ENCODE measurements at regions of chr4 and their contacts with region 1.

Region 1: DNA sequence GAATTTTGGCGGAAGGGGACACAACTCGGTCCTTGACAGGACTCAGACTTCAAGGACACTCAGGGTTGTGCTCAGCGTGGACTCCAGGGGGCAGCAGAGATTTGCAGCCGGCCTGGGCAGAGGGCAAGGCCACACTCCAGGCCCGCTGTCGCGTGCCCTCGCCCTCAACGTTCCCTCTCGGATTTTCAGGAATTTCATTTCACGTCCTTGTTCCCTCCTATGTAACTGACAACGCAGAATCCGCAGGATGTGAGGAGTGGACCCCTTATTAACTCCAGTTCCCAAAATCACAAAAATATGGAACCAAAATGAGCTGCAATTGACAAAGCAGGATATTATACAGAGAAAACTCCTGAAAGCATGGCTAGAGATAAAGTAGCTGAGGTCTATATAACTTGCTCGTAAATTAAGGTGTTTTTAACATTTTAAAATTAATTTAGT is 21.0 kb upstream of the DCTD start:
- DNase-seq: no peak
- H3K4me3 ChIP-seq: no peak overlapping the region
- CTCF ChIP-seq: peak; percentile 95

Region 2: GRCh38 chr4:182917182-182918043 is 20.8 kb before region 1 on chr4 and contains the start of gene DCTD:
- CTCF ChIA-PET with region 1: interaction called, 84 read pairs
- POLR2A ChIA-PET with region 1: no interaction called
- DNase-seq: no peak
- H3K4me3 ChIP-seq: peak within 1 kb of the TSS; percentile 71
- CTCF ChIP-seq: peak; percentile 48

Region 3: DNA sequence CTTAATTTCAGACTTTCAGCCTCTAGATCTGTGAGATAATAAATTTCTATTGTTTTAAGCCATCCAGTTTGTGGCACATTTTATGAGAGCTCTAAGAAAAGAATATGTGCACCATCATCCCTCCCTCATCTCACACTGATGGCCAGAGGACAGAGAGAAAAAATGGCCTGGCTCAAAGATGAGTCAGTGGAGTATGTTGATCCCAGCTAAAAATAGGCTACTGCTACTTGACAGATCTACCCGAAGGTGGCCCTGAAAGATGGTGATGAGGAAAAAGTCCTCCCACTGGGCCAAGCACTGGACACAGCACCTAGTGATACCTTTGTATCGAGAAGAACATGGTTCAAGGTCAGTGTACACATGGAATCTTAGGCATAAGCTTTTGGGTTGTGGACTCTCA is 17.2 kb after region 1 on chr4:
- CTCF ChIA-PET with region 1: interaction called, 81 read pairs
- POLR2A ChIA-PET with region 1: no interaction called
- DNase-seq: no peak
- H3K4me3 ChIP-seq: no peak overlapping the region
- CTCF ChIP-seq: no peak

Region 4: GRCh38 chr4:183098723-183099536 is 160.7 kb after region 1 on chr4 and contains the start of gene WWC2:
- CTCF ChIA-PET with region 1: interaction called, 11 read pairs
- POLR2A ChIA-PET with region 1: no interaction called
- DNase-seq: peak; percentile 41
- H3K4me3 ChIP-seq: peak within 1 kb of the TSS; percentile 94
- CTCF ChIP-seq: peak; percentile 7

Region 5: DNA sequence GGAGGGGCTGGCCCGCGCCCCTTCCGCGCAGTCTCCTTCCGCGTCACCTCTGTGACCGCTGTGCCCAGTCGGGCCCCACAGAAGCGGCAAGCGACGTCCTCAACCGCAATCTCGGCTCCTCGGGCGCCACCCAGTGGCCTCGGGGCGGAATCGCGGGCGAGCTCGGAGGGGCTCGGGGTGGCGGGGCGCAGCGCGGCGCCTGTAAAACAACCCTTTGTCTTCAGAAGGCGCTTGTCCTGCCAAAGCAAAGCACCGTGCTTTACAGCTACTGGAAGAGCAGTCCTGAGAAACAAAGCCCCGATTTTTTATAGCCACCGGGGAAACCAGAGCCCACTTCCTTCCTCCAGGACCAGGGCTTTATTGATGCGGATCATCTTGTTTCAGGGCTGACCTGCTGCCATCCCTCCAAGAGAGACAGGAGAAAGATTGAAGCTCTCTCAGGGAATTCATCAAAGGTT is 468.9 kb after region 1 on chr4:
- CTCF ChIA-PET with region 1: interaction called, 25 read pairs
- POLR2A ChIA-PET with region 1: no interaction called
- DNase-seq: no peak
- H3K4me3 ChIP-seq: peak overlapping the region; percentile 63
- CTCF ChIP-seq: peak; percentile 95

Measured in AG04449 (cell line).